Naive thymus-derived CD4-positive, alpha-beta T cell (primary cell): ENCODE measurements at regions of chr19 and their contacts with region 1.

Region 1: GRCh38 chr19:40078377-40078776 is 12.4 kb downstream of the ZNF780A start:
- DNase-seq: no peak
- ATAC-seq: no peak
- H3K4me3 ChIP-seq: no peak overlapping the region
- H3K4me3 Mint-ChIP-seq: no peak overlapping the region
- H3K27ac ChIP-seq: no peak overlapping the region
- H3K27ac Mint-ChIP-seq: peak overlapping the region in 1 of 9 donors; percentile 32
- H3K4me1 ChIP-seq: no peaks in the 10 kb centered on the region
- H3K4me1 Mint-ChIP-seq: peaks cover 0 to 8% (median 4%) of the 10 kb centered on the region in 7 donors
- H3K27me3 ChIP-seq: no peaks in the 10 kb centered on the region
- H3K27me3 Mint-ChIP-seq: no peaks in the 10 kb centered on the region

Region 2: DNA sequence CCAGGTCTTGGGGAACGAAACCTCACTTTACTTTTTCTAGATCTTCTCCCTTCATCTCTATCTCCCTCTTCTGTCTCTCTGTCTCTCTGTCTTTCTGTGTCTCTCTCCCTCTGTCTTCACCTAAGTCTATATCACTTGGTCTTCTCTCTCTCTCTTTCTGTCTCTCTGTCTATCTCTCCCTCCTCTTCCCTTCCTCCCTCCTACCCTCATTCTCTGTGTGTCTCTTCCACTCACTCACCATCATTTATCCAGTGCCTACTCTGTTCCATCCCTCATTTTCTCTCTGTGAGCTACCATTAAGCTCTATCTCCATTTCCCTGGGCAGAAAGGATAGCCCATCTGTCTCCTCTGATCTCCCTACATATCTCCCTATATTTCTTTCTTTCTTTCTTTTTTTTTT is 200.0 kb before region 1 on chr19:
- CTCF ChIA-PET with region 1: no interaction called
- POLR2A ChIA-PET with region 1: no interaction called
- intact Hi-C with region 1: no loop called
- DNase-seq: no peak
- ATAC-seq: no peak
- H3K4me3 ChIP-seq: no peak overlapping the region
- H3K4me3 Mint-ChIP-seq: no peak overlapping the region
- H3K27ac ChIP-seq: no peak overlapping the region
- H3K27ac Mint-ChIP-seq: peak overlapping the region in 2 of 9 donors; percentile 4 to 22
- H3K4me1 ChIP-seq: no peaks in the 10 kb centered on the region
- H3K4me1 Mint-ChIP-seq: peaks cover 0 to 7% (median 5%) of the 10 kb centered on the region in 7 donors
- H3K27me3 ChIP-seq: no peaks in the 10 kb centered on the region
- H3K27me3 Mint-ChIP-seq: no peaks in the 10 kb centered on the region

Region 3: GRCh38 chr19:39917561-39918182 is 160.7 kb before region 1 on chr19:
- CTCF ChIA-PET with region 1: no interaction called
- POLR2A ChIA-PET with region 1: no interaction called
- intact Hi-C with region 1: no loop called
- DNase-seq: no peak
- ATAC-seq: no peak
- H3K4me3 ChIP-seq: no peak overlapping the region
- H3K4me3 Mint-ChIP-seq: no peak overlapping the region
- H3K27ac ChIP-seq: no peak overlapping the region
- H3K27ac Mint-ChIP-seq: peak overlapping the region in 1 of 9 donors; percentile 41
- H3K4me1 ChIP-seq: peaks cover 0 to 4% of the 10 kb centered on the region in 2 donors
- H3K4me1 Mint-ChIP-seq: peaks cover 0 to 23% (median 14%) of the 10 kb centered on the region in 7 donors
- H3K27me3 ChIP-seq: no peaks in the 10 kb centered on the region
- H3K27me3 Mint-ChIP-seq: no peaks in the 10 kb centered on the region

Region 4: DNA sequence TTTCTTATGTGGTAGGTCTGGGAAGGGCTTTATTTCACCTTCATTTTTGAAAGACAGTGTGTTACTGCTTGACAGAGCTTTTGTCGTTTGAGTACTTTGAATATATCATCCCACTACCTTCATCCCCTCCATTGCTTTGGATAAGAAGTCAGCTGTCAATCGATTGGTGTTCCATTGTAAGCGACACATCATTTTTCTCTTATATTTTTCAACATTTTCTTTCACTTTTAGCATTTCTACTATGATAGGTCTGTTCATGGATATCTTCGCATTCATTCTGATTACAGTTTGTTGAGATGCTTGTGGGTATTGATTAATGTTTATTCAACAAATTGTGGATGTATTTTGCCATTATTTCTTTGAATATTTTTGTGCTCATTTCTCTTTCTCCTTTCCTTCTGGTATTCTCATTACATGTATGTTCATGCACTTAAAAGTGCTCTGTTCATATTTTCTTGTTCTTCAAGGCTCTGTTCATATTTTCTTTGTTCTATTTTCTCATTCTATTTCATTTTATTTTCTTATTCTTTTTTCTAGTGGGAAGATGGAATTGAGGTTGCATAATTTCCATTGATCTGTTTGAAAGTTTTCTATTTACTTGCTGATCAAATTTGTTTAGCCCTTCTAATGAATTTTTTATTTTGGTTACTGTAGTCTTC is 52.3 kb before region 1 on chr19:
- CTCF ChIA-PET with region 1: no interaction called
- POLR2A ChIA-PET with region 1: no interaction called
- intact Hi-C with region 1: loop called in 1 of 2 experiments (anchors 10 kb)
- DNase-seq: no peak
- ATAC-seq: no peak
- H3K4me3 ChIP-seq: no peak overlapping the region
- H3K4me3 Mint-ChIP-seq: no peak overlapping the region
- H3K27ac ChIP-seq: no peak overlapping the region
- H3K27ac Mint-ChIP-seq: peak overlapping the region in 1 of 9 donors; percentile 26
- H3K4me1 ChIP-seq: no peaks in the 10 kb centered on the region
- H3K4me1 Mint-ChIP-seq: peaks cover 0 to 2% (median 0%) of the 10 kb centered on the region in 7 donors
- H3K27me3 ChIP-seq: no peaks in the 10 kb centered on the region
- H3K27me3 Mint-ChIP-seq: no peaks in the 10 kb centered on the region